ENCODE measurements at regions of chr9 and their contacts with region 1.

Region 1: DNA sequence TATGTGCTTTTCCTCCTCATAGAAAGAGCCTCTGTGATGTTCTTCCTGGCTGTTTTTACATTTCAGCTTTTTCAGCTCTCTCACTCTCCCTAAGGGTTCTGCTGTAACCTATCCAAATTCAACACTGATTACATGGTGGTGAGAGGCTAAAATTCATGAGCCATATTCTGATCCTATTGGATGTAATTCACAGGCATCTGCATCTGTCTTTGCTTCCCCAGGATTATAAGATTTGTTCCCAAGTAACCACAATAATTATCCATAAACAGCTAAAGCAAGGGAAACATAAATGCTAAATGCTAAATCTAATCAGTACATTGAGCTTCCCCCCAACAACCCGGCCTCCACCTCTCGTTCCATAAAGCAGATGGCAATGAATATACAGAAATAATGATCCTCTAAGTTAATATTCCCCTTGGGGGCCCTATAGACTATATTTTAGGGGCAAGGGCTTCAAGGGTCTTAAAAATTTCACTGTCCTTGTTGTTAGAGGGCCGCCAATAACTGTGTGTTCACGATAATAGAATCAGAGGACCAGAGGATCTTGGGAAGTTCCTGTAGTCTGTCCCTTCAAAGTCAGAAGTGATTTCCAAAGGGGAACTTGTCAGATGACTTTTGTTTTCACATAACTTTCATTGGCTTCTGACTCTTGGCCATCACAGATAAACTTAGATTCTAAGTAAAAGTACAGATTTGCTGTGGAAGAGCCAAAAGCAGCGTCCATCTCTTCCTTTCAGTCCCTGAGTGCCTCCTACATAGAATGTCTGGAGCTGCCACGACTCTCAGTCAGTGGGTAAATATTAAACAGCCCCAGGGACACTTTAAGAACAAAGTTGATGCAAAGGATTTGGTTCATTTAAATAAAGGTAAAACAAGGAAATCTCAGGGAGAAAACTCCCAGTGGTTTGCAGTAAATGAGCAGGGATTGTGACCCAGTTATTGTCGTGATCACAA is 125.6 kb downstream of the ALDH1A1 start:
- DNase-seq: no peak
- H3K4me3 ChIP-seq: no peak overlapping the region
- H3K27ac ChIP-seq: no peak overlapping the region
- H3K27me3 ChIP-seq: no peaks in the 10 kb centered on the region
- CTCF ChIP-seq: no peak

Region 2: DNA sequence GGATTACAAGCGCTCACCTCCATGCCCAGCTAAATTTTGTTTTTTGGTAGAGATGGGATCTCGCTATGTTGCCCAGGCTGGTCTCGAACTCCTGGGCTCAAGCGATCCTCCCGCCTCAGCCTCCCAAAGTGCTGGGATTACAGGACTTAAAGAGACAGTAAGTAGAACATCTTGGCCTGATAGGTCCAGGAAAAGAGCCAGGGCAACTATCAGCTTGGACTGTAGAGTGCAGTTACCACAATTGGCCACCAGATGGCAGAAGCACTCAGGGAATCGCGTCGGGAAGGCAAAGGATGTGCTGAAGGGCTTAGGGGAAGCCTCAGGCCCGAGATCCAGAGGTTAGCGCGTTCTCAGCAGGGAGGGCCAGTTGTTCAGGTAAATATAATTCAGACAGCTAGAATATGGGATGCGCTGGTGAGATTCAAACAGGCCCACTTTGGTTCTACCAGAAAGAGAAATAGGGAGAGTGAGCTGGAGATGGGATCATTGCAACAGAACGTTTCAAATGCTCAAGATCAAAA is 788.3 kb before region 1 on chr9:
- CTCF ChIA-PET with region 1: interaction called, 39 read pairs
- POLR2A ChIA-PET with region 1: no interaction called
- DNase-seq: peak; percentile 61
- H3K4me3 ChIP-seq: no peak overlapping the region
- H3K27ac ChIP-seq: no peak overlapping the region
- H3K27me3 ChIP-seq: peaks cover 6% of the 10 kb centered on the region
- CTCF ChIP-seq: peak; percentile 96

Region 3: DNA sequence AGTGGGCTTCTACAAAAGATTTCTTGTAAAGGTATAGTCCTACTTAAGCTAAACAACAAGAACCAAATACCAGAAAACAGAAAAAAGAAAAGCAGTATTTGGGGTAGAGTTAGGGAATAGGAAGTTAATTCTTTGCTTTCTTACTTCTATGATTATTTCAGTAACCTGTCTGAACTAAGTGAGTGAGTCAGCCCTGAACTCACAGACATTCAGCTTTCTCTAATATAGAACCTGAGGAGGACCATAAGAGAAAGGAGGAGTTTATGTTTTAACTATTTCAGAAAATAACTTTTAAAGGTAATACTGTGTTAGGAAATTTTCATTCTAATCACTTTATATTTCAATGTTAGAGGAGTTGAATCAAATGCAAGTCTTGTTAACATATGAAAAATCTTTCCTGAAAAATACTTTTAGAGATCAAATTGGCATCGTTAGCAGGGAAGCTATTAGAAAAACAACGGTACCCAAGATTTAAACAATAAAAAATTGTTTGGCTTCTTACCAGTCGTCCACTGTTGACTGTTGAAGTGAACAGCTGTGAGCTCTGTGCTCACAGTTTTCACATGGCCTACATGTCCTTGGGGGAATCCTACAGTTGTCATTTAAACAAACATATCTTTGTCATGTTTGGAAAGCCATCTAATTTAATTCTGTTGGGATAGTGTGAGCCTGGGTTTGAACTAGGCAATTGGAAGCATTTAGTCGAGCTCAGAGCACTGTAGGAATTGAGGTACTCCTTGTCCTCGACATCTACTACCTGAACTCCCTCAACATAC is 442.4 kb before region 1 on chr9:
- CTCF ChIA-PET with region 1: no interaction called
- POLR2A ChIA-PET with region 1: no interaction called
- DNase-seq: no peak
- H3K4me3 ChIP-seq: no peak overlapping the region
- H3K27ac ChIP-seq: no peak overlapping the region
- H3K27me3 ChIP-seq: no peaks in the 10 kb centered on the region
- CTCF ChIP-seq: no peak

Region 4: DNA sequence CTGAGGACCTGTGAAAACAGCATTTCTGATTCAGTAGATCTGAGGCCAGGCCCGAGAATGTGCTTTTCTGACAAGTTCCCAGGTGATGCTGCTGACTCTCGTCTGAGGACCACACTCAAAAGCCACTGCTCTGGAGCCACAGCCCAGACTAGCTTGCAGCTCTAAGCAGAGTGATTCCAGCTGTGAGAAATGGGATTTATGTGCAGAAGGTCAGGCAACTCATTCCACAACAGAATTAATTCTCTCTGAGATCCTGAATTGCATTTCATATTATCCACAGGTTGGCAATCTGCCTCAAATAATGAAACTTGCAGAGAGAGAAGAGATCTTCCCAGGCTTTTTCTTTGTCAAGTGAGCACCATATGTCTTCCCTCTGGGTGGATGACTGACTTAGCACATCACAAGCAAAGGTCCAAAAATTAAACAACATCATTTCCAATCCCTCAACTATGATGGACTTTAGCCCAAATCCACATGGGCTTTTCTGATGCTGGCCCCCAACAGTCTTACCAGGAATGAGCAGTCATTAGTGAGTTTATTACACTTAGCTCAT is 14.6 kb before region 1 on chr9:
- CTCF ChIA-PET with region 1: interaction called, 10 read pairs
- POLR2A ChIA-PET with region 1: no interaction called
- DNase-seq: no peak
- H3K4me3 ChIP-seq: no peak overlapping the region
- H3K27ac ChIP-seq: no peak overlapping the region
- H3K27me3 ChIP-seq: no peaks in the 10 kb centered on the region
- CTCF ChIP-seq: no peak

Region 5: GRCh38 chr9:72882117-72882775 is 55.0 kb after region 1 on chr9:
- CTCF ChIA-PET with region 1: no interaction called
- POLR2A ChIA-PET with region 1: no interaction called
- DNase-seq: no peak
- H3K4me3 ChIP-seq: no peak overlapping the region
- H3K27ac ChIP-seq: no peak overlapping the region
- H3K27me3 ChIP-seq: no peaks in the 10 kb centered on the region
- CTCF ChIP-seq: no peak

Measured in AG04450 (cell line).